Lower lobe of right lung (tissue), 2 donors: ENCODE measurements at regions of chr11 and their contacts with region 1.

Region 1: DNA sequence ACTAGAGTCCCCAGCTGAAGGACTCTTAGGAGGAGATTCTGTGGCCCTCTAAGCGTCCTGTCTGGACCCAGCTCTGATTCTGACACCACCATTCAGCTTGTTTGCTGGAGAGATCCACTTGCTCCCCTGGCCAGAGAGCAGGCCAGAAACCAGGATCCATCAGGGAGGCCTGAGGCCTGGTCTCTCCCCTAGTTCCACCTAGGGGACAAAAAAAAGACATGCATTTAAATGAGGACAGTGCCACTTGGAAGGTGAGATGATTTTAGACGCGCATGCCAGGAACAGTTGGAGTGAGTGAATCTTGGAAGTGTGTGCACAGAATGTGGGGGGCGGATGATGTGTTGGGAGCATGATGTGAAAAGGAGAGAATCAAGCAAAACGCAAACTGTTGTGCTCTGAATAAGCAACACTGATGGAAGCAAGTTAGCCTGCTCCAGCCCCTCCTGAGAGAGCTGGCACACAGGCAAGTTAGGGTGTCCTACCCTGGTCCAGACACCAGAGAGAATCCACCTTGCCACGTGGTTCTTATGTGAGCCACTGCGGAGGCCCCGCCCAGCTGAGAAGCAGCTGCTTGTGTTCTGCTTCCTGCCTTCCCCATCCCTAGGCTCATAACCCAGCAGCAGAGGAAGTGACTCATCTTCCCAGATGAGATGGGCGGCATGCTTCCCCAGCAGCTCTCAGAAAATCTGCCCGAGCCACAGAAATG is 8.0 kb upstream of the SLCO2B1 start:
- DNase-seq: peak; percentile 88
- ATAC-seq: peak; percentile 84 to 85
- H3K4me3 ChIP-seq: no peak overlapping the region
- H3K27ac ChIP-seq: peak overlapping the region; percentile 36
- H3K4me1 ChIP-seq: peaks cover 46% of the 10 kb centered on the region
- H3K27me3 ChIP-seq: no peaks in the 10 kb centered on the region
- CTCF ChIP-seq: no peak

Region 2: GRCh38 chr11:75204685-75205563 is 62.1 kb after region 1 on chr11:
- intact Hi-C with region 1: loop called (anchors 10 kb)
- DNase-seq: peak; percentile 90
- ATAC-seq: peak; percentile 89 to 90
- H3K4me3 ChIP-seq: no peak overlapping the region
- H3K27ac ChIP-seq: no peak overlapping the region
- H3K4me1 ChIP-seq: no peaks in the 10 kb centered on the region
- H3K27me3 ChIP-seq: no peaks in the 10 kb centered on the region
- CTCF ChIP-seq: peak; percentile 89

Region 3: DNA sequence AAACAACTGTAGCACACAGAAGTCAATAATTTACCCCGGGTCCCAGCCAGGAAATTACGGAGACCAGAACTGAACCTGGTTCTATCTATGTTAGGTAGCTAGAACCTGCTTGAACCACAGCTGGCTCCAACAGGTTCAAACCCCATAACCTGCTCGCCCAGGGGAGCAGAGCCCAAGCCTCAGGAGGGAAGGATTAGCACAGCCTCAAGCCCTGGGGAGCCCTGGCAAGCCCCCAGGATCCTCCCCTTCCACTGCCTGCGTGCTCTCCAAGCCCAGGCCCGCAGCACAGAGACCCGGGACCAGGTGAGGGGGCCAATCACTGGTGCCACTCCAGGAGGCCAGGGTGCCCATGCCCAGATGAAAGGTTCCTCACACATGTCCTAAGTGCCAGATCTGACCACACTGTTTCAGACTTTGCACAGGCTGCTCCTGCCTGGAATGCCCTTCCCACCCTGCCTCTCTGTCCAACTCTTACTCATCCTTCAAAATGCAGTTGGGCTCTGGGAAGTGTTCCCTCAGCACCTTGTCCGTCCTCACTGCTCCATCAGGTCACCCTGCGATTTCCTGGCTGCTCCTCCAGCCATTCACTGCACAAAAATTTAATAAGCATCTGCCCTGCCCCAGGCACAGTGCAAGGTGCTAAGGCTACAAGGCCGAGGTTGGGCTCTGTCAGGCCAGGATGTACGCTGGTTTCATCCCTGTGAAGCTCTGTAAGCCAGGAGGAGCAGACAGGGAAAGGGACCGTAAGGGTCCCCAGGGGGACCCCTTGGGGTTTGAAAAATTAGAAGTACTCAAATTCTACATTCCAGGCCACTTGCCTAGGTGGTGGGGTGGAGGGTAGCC is 176.4 kb after region 1 on chr11:
- intact Hi-C with region 1: no loop called
- DNase-seq: peak; percentile 47
- ATAC-seq: peak; percentile 21 to 29
- H3K4me3 ChIP-seq: no peak overlapping the region
- H3K27ac ChIP-seq: peak overlapping the region; percentile 38
- H3K4me1 ChIP-seq: peaks cover 87% of the 10 kb centered on the region
- H3K27me3 ChIP-seq: no peaks in the 10 kb centered on the region
- CTCF ChIP-seq: no peak